Posterior vena cava (tissue), 2 donors: ENCODE measurements at regions of chr7 and their contacts with region 1.

Region 1: DNA sequence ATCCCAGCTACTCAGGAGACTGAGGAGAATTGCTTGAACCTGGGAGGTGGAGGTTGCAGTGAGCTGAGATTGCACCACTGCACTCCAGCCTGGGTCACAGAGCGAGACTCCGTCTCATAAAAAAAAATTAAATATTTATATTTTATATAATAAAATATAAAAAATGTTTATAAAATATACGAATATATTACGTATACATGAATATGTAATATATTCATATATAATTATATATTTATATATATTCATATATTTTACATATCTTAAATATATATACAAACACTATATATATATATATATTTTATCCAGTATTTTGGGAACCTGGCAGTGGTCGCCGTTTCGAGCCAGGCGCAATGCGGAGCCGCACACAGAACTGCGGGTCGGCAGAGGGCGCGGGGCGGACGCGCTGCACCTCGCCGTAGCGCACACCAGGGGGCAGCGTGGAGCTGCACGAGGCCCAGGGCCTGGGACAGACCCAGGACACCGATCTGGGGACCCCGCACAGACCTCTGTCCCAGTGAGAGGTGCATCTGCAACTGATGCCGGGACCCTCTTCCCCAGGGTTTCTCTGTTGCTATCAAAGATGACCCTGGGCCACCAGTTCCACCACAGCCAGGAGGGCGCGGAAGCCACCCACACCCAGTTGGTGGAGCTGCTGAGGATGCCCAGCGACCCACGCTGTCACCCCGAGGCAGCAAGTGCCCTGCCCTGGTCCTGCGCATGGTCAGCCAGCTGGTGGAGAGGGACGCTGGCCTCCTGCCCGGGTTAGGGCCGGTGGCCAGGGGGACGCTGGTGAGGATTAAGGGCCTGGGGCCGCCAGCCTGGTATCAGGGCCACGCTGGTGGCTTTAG is 22.7 kb downstream of the AP5Z1 start:
- DNase-seq: no peak

Region 2: DNA sequence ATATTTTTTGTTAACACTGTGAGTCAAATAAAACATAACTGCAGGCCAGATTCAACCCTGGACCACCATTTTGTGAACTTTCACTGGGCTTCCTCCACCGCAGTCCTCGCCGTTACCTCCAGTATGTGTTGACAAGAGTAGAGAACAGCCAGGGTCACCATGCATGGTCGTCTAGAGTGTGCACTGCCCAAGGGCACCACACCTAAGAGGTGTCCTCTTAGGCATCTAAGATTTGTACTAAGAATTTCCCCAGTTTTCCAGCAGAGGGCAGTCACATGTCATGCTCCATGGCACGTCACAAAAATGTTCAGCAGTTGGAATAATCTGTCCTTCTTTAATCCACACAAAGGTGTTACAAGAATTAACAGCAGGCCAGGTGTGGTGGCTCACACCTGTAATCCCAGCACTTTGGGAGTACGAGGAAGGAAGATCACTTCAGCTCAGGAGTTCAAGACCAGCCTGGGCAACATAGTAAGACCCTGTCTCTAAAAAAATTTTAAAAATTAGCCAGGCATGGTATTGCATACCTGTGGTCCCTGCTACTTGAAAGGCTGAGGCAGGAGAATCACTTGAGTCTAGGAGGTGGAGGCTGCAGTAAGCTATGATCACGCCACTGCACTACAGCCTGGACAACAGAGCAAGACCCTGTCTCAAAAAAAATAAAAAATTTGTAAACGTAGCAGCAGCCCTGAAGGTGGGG is 187.2 kb before region 1 on chr7:
- intact Hi-C with region 1: no loop called
- DNase-seq: peak; percentile 53

Region 3: DNA sequence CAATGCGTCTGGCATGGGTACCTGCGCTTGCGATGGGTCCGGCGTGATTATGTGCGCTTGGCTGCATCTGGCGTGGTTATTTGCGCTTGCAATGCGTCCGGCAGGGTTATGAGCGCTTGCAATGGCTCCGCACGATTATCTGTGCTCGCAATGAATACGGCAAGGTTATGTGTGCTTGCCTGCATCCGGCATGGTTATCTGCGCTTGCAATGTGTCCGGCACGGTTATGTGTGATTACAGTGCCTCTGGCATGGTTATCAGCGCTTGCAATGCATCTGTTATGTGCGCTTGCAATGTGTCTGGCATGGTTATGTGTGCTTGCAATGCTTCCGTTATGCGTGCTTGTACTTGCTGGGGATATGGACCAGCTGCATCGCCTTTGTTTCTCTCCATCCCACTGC is 285.2 kb after region 1 on chr7:
- intact Hi-C with region 1: loop called (anchors 5 to 10 kb)
- DNase-seq: no peak

Region 4: DNA sequence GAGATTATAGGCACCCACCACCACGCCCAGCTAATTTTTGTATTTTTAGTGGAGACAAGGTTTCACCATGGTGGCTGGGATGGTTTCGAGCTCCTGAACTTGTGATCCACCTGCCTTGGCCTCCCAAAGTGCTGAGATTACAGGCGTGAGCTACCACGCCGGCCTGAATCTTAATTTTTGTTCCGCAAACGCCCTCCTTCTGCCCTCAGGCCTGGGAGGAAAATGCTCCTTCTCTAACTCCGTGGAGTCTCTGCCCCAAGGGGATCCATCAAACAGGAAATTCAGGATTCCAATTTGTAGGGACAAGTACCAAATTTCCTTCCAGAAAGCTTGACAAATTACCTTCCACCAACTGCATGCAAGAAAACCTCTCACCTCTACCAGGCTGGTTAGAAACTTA is 290.8 kb after region 1 on chr7:
- intact Hi-C with region 1: loop called (anchors 5 to 10 kb)
- DNase-seq: peak; percentile 56